Right ventricle myocardium inferior (tissue), 1 donor: ENCODE measurements at regions of chr2 and their contacts with region 1.

Region 1: GRCh38 chr2:129133692-129134641 is 815.3 kb upstream of the HS6ST1 start:
- DNase-seq: no peak
- ATAC-seq: no peak

Region 2: GRCh38 chr2:129061069-129061768 is 72.7 kb before region 1 on chr2:
- intact Hi-C with region 1: loop called (anchors 2 kb)
- DNase-seq: no peak
- ATAC-seq: no peak

Region 3: DNA sequence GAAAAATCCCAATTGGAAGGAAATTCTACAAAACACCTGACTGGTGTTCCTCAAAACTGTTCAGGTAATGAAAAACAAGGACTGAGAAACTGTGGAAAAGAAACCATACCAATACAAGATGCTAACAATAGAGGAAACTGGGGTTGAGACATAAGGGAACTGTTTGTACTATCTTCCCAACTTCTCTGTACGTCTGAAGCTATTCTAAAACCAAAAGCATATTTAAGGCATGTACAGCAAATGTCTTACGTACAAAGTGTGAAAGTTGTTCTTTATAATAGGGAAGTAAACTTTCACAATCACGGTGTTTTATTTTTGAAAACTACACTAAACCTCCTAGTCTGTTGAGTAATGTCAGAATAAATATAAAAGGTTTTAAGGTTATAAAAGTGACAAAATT is 69.4 kb after region 1 on chr2:
- intact Hi-C with region 1: no loop called
- DNase-seq: no peak
- ATAC-seq: peak; percentile 39